ENCODE measurements at regions of chr13 and their contacts with region 1.

Region 1: GRCh38 chr13:20037908-20038307 is 79.4 kb downstream of the ZMYM2 start:
- DNase-seq: no peak

Region 2: DNA sequence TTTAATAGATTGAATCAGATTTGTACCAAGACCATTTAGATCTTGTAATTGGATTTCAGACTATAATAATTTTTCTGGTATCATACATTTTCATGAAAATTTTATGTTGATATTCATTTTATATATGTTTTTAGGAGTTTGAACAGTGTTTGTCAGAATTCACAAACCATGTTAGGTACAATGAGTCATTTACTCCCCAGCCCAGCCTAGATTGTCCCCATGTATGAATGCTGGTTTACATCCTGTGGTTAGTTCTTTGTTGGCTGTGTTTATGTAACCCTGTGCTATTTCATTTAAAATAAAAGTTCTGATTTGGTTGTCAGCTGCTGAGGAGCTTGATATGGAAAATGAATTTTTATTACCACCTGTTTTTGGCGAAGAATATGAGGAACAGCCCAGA is 26.2 kb after region 1 on chr13:
- CTCF ChIA-PET with region 1: interaction called, 13 read pairs
- POLR2A ChIA-PET with region 1: no interaction called
- DNase-seq: no peak

Measured in HEK293T (cell line).